Activated T-helper 1 cell treated with anti-CD3 and anti-CD28 coated beads, Interleukin-12 subunit alpha, Interleukin-12 subunit beta, Interleukin-2, Interleukin-4 antibody, amounts not matched to agents 30 ng/mL and 10 ng/mL and 1 ng/mL, durations not matched to agents 14 hours and 24 hours and 36 hours (primary cell): ENCODE measurements at regions of chr1 and their contacts with region 1.

Region 1: DNA sequence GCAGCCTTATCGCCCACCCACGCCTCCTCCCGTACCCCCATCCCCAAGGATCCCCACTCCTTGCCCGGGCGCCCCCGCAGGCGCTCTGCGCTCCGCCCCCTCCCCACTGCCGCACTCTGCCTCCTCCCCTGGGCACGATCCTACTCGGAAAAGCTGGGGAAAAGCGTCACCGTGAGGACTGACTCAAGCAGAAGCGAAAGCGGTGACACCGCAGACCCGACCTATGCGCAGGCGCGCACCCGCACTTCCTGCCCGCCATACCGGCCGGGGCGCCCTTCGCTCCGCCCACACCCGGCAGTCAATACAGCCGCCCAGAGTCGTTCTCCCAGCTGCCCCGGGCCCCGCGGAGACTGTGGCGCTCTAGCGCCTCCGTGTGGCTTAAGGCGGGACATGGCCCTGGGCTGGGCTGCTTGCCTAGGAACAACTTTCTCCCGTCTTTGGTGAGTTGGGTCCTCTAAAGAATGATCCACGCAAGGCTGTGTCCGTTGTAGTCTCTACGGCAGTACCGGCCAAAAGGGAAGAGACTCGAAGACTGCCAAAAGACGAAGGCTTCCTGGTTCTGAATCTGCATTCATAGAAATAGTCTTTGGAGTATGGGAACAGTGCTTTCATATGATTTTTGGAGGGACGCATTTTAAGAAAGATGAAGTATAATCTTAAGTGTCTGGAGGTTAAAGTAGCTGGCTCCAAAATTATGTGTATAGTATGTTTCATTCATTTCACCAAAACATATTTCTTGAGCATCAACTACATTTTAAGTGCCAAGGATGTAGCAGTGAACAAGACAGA is at the start of gene OMA1:
- DNase-seq: peak; percentile 97
- H3K4me3 Mint-ChIP-seq: peak within 1 kb of the TSS; percentile 91
- H3K27ac Mint-ChIP-seq: peak within 1 kb of the TSS; percentile 95
- H3K4me1 Mint-ChIP-seq: peaks cover 19% of the 10 kb centered on the region
- H3K27me3 Mint-ChIP-seq: peaks cover 15% of the 10 kb centered on the region
- total RNA-seq, gene OMA1: 12.9 and 13.0 TPM in 2 replicates

Region 2: GRCh38 chr1:58515794-58516401 is 30.8 kb before region 1 on chr1:
- intact Hi-C with region 1: loop called (anchors 1 kb)
- DNase-seq: no peak
- H3K4me3 Mint-ChIP-seq: no peak overlapping the region
- H3K27ac Mint-ChIP-seq: no peak overlapping the region
- H3K4me1 Mint-ChIP-seq: peaks cover 16% of the 10 kb centered on the region
- H3K27me3 Mint-ChIP-seq: no peaks in the 10 kb centered on the region

Region 3: DNA sequence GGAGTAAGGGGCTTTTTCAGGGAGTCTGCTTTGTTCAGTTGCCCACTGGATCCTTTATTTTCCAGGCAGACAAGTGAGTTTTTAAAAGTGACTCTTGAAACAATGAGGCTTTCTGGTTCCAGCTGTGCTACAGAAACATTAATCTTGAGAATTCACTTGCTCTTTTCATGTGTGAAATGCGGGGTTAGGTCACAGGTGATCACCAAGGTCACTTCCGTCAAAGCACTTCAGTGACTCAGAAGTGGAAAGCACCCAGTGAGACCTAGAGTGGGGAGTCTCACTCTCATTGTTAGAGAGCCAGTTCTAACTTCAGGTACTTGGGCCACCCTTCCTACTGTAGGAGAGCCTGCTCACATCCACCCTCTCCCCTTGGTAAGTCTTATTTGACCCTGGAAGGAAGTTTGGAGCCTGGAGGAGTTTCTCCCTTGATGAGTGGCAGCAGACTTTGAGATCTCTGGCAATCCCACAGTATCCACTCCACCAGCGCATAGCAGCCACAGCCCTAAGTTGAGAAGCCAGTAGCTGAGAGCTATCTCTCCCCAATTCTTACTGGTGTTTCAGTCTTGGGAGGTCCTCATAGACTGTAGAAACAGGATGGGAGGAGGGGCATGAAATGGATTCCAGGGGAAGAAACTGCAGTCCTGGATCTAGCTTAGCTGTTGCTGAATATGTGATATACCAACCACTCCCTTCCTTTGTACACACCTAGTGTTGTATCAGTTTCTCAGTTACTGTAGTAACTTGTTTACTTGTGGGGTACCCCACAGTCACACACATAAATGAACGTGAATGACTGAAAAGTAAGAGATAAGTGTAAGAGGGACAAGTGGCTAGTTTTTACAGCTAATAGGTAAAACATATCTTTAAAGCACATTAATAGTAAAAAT is 27.2 kb after region 1 on chr1:
- intact Hi-C with region 1: loop called (anchors 1 kb)
- DNase-seq: peak; percentile 67
- H3K4me3 Mint-ChIP-seq: peak overlapping the region; percentile 41
- H3K27ac Mint-ChIP-seq: peak overlapping the region; percentile 26
- H3K4me1 Mint-ChIP-seq: peaks cover 44% of the 10 kb centered on the region
- H3K27me3 Mint-ChIP-seq: peaks cover 74% of the 10 kb centered on the region

Region 4: GRCh38 chr1:58699011-58699762 is 152.5 kb after region 1 on chr1:
- intact Hi-C with region 1: loop called (anchors 1 kb)
- DNase-seq: no peak
- H3K4me3 Mint-ChIP-seq: peak overlapping the region; percentile 99
- H3K27ac Mint-ChIP-seq: peak overlapping the region; percentile 98
- H3K4me1 Mint-ChIP-seq: peaks cover 9% of the 10 kb centered on the region
- H3K27me3 Mint-ChIP-seq: no peaks in the 10 kb centered on the region

Region 5: DNA sequence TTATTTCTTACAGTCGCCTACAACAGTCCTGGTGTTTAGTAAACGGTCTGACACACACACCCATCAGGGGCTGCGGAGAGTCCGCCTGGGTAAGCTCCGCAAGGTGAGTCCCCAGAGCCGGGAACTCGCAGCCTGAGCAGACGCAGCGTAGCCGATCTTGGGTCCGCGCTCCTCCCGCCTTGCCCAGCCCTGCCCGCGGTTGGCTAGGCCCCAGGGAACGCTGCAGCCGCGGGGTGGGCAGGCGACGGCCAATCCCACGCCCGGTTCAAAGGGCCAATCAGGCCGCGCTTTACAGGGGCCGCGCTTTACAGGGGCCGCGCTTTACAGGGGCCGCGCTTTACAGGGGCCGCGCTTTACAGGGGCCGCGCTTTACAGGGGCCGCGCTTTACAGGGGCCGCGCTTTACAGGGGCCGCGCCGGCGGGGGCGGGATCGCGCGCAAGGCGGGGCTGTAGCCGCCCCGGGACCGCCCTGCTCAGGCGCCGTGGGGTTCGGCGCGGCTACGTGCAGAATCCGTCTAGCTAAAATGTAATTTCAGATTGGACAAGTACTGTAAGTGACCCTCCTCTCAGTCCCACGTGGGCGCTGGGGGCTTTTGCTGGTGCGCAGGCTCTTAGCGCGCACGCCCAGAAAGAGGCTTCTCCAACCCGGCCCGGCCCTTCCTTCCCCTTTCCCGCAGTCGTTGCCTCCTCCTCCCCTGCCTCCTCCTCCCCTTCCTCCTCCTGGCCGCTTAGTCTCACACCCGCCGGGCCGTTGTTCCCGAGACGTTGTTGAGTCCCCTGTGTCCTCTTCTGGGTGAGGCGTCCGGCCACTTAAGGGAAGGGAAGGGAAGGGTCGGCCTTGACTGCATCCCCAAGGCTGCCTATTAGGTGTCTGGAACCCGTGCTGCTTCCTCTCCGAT is 749.9 kb after region 1 on chr1 and contains the start of gene FGGY:
- intact Hi-C with region 1: loop called (anchors 5 kb)
- DNase-seq: peak; percentile 86
- H3K4me3 Mint-ChIP-seq: peak within 1 kb of the TSS; percentile 91
- H3K27ac Mint-ChIP-seq: peak within 1 kb of the TSS; percentile 91
- H3K4me1 Mint-ChIP-seq: peaks cover 48% of the 10 kb centered on the region
- H3K27me3 Mint-ChIP-seq: no peaks in the 10 kb centered on the region
- total RNA-seq, gene FGGY: 7.1 and 8.2 TPM in 2 replicates